ENCODE measurements at regions of chr17 and their contacts with region 1.

Region 1: DNA sequence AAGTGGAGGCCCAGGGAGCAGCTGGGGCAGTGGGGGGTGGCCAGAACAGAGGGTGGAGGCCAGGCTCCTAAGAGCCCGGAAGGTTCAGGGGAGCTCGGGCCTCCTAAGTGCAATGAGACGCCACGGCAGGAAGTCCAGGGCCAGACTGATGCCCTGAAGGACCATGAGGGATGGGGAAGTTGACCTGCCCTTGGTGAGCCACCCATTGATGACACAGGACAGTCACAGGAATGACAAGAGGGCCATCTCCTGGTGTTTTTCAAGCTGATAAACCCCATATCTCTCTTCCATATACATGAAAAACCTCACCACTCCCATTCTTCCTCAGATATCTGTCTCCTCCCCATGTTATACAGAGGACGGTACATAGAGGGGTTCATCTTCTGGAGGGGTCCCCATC is 5.8 kb upstream of the MRPL58 start:
- DNase-seq: peak; percentile 45 to 69 (median 62)
- ATAC-seq: peak; percentile 83
- H3K4me3 ChIP-seq: no peak overlapping the region
- H3K27ac ChIP-seq: no peak overlapping the region
- H3K4me1 ChIP-seq: peaks cover 11 to 25% of the 10 kb centered on the region in 2 experiments; a peak in 4 of 5 replicates
- H3K27me3 ChIP-seq: no peaks in the 10 kb centered on the region
- CTCF ChIP-seq: peak; percentile 60 to 80 (median 61)
- EP300 ChIP-seq: no peak
- POLR2A ChIP-seq: no peak
- RAD21 ChIP-seq: peak; percentile 89 to 96

Region 2: DNA sequence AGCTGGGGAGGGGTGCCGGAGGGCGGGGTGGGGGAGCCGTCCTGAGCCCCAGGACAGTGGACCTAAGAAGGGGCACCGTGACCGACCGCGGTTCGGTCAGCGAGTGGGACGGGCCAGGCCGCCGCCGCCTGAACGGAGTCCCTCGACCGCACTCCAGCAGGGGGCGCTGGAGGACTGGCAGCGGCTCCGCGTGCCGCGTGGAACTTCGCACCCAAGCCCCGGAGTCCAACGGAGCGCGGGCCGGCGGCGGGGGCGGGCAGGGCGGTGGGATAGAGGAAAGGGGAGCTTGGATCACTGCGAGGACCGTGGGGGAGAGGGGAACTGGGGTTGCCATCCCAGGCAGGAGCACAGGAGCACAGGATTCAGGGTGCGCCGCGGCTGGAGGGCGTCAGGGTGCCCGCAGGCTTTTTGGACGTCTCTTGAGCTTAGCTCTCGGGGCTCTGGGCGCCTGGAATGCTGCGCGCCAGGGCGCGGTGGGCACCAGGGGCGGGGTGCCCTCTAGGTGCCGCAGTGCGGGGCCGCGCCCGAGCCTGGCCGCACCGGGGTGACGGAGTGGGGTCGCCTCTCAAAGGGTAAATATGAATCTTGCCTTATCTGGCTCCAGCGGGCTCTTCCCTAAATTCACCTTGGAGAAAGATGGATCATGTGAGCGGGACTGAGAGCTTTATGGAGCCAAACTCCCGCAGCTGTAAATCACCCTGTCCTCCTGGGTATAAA is 83.0 kb before region 1 on chr17:
- CTCF ChIA-PET with region 1: no interaction called
- POLR2A ChIA-PET with region 1: no interaction called
- in situ Hi-C with region 1: no loop called
- intact Hi-C with region 1: loop called (anchors 10 kb)
- DNase-seq: peak; percentile 82 to 91 (median 89)
- ATAC-seq: peak; percentile 87
- H3K4me3 ChIP-seq: peak overlapping the region; percentile 53
- H3K27ac ChIP-seq: peak overlapping the region; percentile 66; the same call in 2 of the 3 replicates
- H3K4me1 ChIP-seq: peaks cover 18 to 55% of the 10 kb centered on the region in 2 experiments
- H3K27me3 ChIP-seq: peaks cover 9 to 30% of the 10 kb centered on the region in 2 experiments; a peak in 4 of 5 replicates
- CTCF ChIP-seq: peak; percentile 66 to 95 (median 82)
- EP300 ChIP-seq: no peak
- POLR2A ChIP-seq: no peak
- RAD21 ChIP-seq: peak; percentile 76 to 84